MCF 10A (cell line): ENCODE measurements at regions of chr1 and their contacts with region 1.

Region 1: DNA sequence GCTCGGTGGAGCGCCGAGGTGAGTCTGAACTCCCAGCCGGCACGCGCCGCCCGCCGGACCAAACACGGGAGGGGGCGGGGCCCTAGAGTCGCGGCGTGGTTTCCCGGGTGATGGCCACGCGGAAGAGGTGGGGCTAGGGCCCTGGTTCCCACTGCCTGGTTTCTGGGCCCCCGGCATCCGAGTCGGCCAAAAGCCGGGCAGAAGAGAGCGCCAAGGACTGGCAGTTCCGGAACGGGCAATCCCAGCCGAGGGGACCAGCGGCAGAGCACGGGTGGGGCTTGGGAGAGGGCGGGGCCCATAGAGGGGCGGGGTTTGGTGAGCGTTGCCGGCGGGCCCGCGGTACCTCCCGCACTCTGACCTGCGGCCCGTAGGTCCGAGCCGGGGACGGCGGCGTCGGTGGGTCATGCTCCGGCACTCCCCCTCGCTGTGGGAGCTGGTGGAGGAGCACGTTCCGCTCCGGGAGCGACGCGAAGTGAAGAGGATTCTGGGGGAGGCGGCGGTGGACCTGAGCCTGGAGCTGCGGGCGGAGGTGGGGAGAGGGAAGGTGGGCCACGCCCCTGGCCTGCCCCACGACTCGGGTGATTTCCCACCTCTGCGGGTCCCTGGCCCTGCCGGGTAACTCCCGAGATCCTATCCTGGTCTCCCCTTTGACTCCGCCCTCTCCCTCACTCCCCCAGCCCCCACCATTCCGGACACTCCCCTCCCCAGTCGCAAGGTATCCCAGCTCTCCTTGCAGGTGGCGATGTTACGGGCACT is at the start of gene CCDC24:
- DNase-seq: peak; percentile 86
- H3K4me3 Mint-ChIP-seq: peak within 1 kb of the TSS; percentile 89
- H3K27ac Mint-ChIP-seq: peak within 1 kb of the TSS; percentile 92
- H3K4me1 Mint-ChIP-seq: no peaks in the 10 kb centered on the region
- H3K27me3 Mint-ChIP-seq: no peaks in the 10 kb centered on the region
- CTCF ChIP-seq: no peak
- total RNA-seq, gene CCDC24: 3.6 and 4.8 TPM in 2 replicates

Region 2: GRCh38 chr1:43711049-43711448 is 280.6 kb before region 1 on chr1:
- CTCF ChIA-PET with region 1: no interaction called
- POLR2A ChIA-PET with region 1: no interaction called
- intact Hi-C with region 1: no loop called
- DNase-seq: peak; percentile 67
- H3K4me3 Mint-ChIP-seq: peak overlapping the region; percentile 42
- H3K27ac Mint-ChIP-seq: peak overlapping the region; percentile 71
- H3K4me1 Mint-ChIP-seq: peaks cover 43% of the 10 kb centered on the region
- H3K27me3 Mint-ChIP-seq: no peaks in the 10 kb centered on the region
- CTCF ChIP-seq: no peak

Region 3: DNA sequence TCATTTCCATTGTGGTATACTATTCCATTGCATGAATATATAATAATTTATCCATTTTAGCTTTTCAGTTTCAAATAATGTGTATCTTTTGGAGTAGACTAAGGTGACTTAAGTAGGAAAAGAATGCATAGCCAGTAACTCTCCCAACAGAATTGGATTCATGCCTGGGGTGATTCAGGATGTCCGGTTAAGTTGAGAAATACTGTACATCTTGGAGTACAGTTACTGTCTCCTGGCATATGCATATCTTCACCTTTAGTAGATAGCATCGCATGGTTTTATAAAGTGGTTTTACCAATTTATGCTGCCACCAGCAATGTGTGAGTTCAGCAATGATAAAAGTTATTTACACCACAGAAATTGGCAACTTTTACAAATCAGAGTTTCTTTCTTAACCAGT is 58.2 kb after region 1 on chr1:
- CTCF ChIA-PET with region 1: interaction called, 16 read pairs
- POLR2A ChIA-PET with region 1: interaction called, 4 read pairs
- intact Hi-C with region 1: no loop called
- DNase-seq: peak; percentile 92
- H3K4me3 Mint-ChIP-seq: no peak overlapping the region
- H3K27ac Mint-ChIP-seq: no peak overlapping the region
- H3K4me1 Mint-ChIP-seq: peaks cover 33% of the 10 kb centered on the region
- H3K27me3 Mint-ChIP-seq: no peaks in the 10 kb centered on the region
- CTCF ChIP-seq: no peak

Region 4: GRCh38 chr1:44294588-44295007 is 302.9 kb after region 1 on chr1:
- CTCF ChIA-PET with region 1: no interaction called
- POLR2A ChIA-PET with region 1: no interaction called
- intact Hi-C with region 1: no loop called
- DNase-seq: peak; percentile 3
- H3K4me3 Mint-ChIP-seq: no peak overlapping the region
- H3K27ac Mint-ChIP-seq: no peak overlapping the region
- H3K4me1 Mint-ChIP-seq: peaks cover 10% of the 10 kb centered on the region
- H3K27me3 Mint-ChIP-seq: no peaks in the 10 kb centered on the region
- CTCF ChIP-seq: no peak